ENCODE measurements at regions of chr2 and their contacts with region 1.

Region 1: GRCh38 chr2:43131024-43131889 is 95.1 kb downstream of the ZFP36L2 start:
- DNase-seq: peak; percentile 79
- H3K4me3 Mint-ChIP-seq: peak overlapping the region; percentile 65
- H3K27ac Mint-ChIP-seq: peak overlapping the region; percentile 67
- H3K4me1 Mint-ChIP-seq: peaks cover 78% of the 10 kb centered on the region
- H3K27me3 Mint-ChIP-seq: no peaks in the 10 kb centered on the region

Region 2: GRCh38 chr2:43142921-43143438 is 11.7 kb after region 1 on chr2:
- intact Hi-C with region 1: loop called (anchors 1 kb)
- DNase-seq: peak; percentile 55
- H3K4me3 Mint-ChIP-seq: peak overlapping the region; percentile 80
- H3K27ac Mint-ChIP-seq: peak overlapping the region; percentile 71
- H3K4me1 Mint-ChIP-seq: peaks cover 49% of the 10 kb centered on the region
- H3K27me3 Mint-ChIP-seq: no peaks in the 10 kb centered on the region

Region 3: GRCh38 chr2:43174368-43174916 is 43.2 kb after region 1 on chr2:
- intact Hi-C with region 1: loop called (anchors 1 kb)
- DNase-seq: peak; percentile 73
- H3K4me3 Mint-ChIP-seq: peak overlapping the region; percentile 38
- H3K27ac Mint-ChIP-seq: peak overlapping the region; percentile 91
- H3K4me1 Mint-ChIP-seq: peaks cover 69% of the 10 kb centered on the region
- H3K27me3 Mint-ChIP-seq: no peaks in the 10 kb centered on the region

Region 4: DNA sequence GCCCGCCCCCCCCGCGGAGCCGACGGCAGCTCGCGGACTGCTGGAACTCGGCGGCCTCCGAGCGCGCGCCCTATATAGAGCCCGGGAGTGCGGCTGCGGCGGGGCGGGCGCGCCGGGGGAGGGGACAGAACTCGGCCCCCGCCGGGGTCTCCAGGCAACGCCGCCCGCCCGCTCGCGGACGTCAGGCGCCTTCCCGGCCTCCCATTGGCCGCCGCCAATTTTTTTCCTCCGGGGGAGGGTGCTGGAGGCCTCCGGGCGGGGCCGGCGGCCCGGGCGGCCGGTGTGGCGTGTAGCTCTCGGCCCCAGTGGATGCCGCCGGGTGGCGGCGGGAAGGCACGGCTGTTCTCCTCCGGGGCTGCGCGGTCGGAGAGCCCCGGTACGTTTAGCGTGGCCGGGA is 95.3 kb after region 1 on chr2 and contains the start of gene ZFP36L2:
- intact Hi-C with region 1: loop called (anchors 1 kb)
- DNase-seq: peak; percentile 95
- H3K4me3 Mint-ChIP-seq: peak within 1 kb of the TSS; percentile 90
- H3K27ac Mint-ChIP-seq: peak within 1 kb of the TSS; percentile 95
- H3K4me1 Mint-ChIP-seq: peaks cover 30% of the 10 kb centered on the region
- H3K27me3 Mint-ChIP-seq: no peaks in the 10 kb centered on the region
- total RNA-seq, gene ZFP36L2: 114 TPM in 2 replicates

Region 5: GRCh38 chr2:43484323-43484930 is 353.2 kb after region 1 on chr2:
- intact Hi-C with region 1: loop called (anchors 5 kb)
- DNase-seq: no peak
- H3K4me3 Mint-ChIP-seq: no peak overlapping the region
- H3K27ac Mint-ChIP-seq: no peak overlapping the region
- H3K4me1 Mint-ChIP-seq: peaks cover 26% of the 10 kb centered on the region
- H3K27me3 Mint-ChIP-seq: no peaks in the 10 kb centered on the region

Region 6: GRCh38 chr2:44167940-44168680 is 1036.9 kb after region 1 on chr2:
- intact Hi-C with region 1: loop called (anchors 5 kb)
- DNase-seq: peak; percentile 97
- H3K4me3 Mint-ChIP-seq: peak overlapping the region; percentile 94
- H3K27ac Mint-ChIP-seq: peak overlapping the region; percentile 99
- H3K4me1 Mint-ChIP-seq: peaks cover 29% of the 10 kb centered on the region
- H3K27me3 Mint-ChIP-seq: no peaks in the 10 kb centered on the region

Measured in activated T-helper 2 cell treated with anti-CD3 and anti-CD28 coated beads, Interferon-gamma antibody, Interleukin-2, Interleukin-4, amounts not matched to agents 10 μg/mL and 5 μg/mL and 100 μg/mL, durations not matched to agents 14 hours and 24 hours and 36 hours (primary cell).